Testis (tissue), 5 donors: ENCODE measurements at regions of chr22 and their contacts with region 1.

Region 1: DNA sequence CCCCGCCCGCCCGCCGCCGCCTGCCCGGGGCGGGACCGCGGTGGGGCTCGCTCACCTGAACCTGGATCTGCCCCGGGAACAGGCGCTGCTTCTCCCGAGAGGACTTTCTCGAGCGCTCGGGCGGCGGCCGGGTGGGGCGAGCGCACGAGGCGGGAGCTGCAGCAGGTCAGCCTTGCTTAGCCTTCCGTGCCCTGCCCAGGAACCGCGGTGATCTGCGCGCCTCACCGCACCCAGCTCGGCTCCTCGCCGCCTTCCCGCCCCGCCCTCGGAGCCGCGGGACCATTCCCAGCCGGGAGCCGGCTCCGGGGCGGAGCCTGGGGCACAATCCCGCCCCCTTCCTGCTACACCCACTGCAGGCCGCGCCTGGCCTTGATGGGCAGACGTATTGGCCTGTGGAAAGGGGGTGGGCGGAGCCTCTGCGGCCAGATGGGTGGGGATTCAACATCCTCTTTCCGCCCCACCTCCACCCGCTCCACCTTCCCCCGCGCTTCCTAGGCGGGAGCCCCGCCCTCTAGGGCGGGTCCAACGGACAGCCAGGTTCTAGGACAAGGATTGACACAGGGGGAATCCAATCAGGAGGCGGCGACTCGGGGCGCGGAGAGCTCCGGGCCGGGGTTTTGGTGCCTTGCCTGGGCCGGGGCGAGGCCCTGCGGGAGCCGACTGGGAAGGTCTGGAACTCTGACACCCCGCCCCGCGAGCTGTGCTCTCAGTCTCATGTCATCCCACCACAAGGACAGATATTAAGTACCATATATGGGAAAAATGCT is at the start of gene MYH9:
- DNase-seq: peak; percentile 100
- H3K4me3 ChIP-seq: peak within 1 kb of the TSS; percentile 80 to 88
- H3K27ac ChIP-seq: peak within 1 kb of the TSS; percentile 84 to 93
- H3K4me1 ChIP-seq: peaks cover 20% of the 10 kb centered on the region
- H3K27me3 ChIP-seq: no peaks in the 10 kb centered on the region
- CTCF ChIP-seq: no peak
- POLR2A ChIP-seq: peak; percentile 96
- total RNA-seq, gene MYH9: 141 to 146 TPM

Region 2: GRCh38 chr22:36329254-36330078 is 58.5 kb before region 1 on chr22:
- intact Hi-C with region 1: loop called (anchors 10 kb)
- DNase-seq: no peak
- H3K4me3 ChIP-seq: no peak overlapping the region
- H3K27ac ChIP-seq: peak overlapping the region; percentile 89 to 92
- H3K4me1 ChIP-seq: peaks cover 90% of the 10 kb centered on the region
- H3K27me3 ChIP-seq: no peaks in the 10 kb centered on the region
- CTCF ChIP-seq: no peak
- POLR2A ChIP-seq: no peak

Region 3: GRCh38 chr22:36454916-36455570 is 67.1 kb after region 1 on chr22:
- intact Hi-C with region 1: loop called (anchors 10 kb)
- DNase-seq: peak; percentile 94
- H3K4me3 ChIP-seq: peak overlapping the region; percentile 61 to 69
- H3K27ac ChIP-seq: peak overlapping the region; percentile 87
- H3K4me1 ChIP-seq: peaks cover 19% of the 10 kb centered on the region
- H3K27me3 ChIP-seq: no peaks in the 10 kb centered on the region
- CTCF ChIP-seq: peak in 1 of 3 experiments; percentile 5
- POLR2A ChIP-seq: peak; percentile 53